B cell (primary cell): ENCODE measurements at regions of chr6 and their contacts with region 1.

Region 1: GRCh38 chr6:32853541-32854375 is at the starts of genes PSMB9 and TAP1:
- DNase-seq: peak; percentile 98
- ATAC-seq: peak; percentile 82
- H3K4me3 ChIP-seq: peak within 1 kb of the TSS; percentile 91 to 98 (median 94)
- H3K4me3 Mint-ChIP-seq: peak within 1 kb of the TSS; percentile 99
- H3K27ac ChIP-seq: peak within 1 kb of the TSS; percentile 98 to 99
- H3K27ac Mint-ChIP-seq: peak within 1 kb of the TSS; percentile 100
- H3K4me1 ChIP-seq: peaks cover 60 to 63% of the 10 kb centered on the region in 2 donors
- H3K4me1 Mint-ChIP-seq: peaks cover 75% of the 10 kb centered on the region
- H3K27me3 ChIP-seq: no peaks in the 10 kb centered on the region
- H3K27me3 Mint-ChIP-seq: no peaks in the 10 kb centered on the region
- CTCF ChIP-seq: peak; percentile 81
- total RNA-seq, gene PSMB9: 174 and 181 TPM in 2 replicates
- total RNA-seq, gene TAP1: 126 and 131 TPM in 2 replicates

Region 2: DNA sequence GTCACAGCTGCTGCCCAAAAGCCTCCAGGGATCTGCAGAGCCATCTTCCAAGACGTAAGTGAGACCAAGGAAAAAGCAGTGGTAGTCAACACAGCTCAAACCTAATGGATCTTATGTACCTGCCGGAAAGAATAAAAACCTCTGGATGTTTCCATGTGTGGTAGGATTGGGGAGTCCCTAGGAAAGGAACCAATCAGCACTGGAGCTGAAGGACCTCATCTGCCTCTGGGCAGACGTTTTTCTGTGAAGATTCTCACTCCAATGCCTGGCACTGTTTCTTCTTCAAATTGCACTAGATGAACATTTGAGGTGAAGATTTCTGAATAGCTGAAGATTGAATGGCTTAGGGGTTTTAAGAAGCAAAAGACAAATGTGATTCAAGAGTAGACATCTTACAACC is 90.3 kb before region 1 on chr6 and contains the start of gene HLA-DQB2:
- CTCF ChIA-PET with region 1: no interaction called
- POLR2A ChIA-PET with region 1: no interaction called
- intact Hi-C with region 1: no loop called
- DNase-seq: peak; percentile 56
- ATAC-seq: no peak
- H3K4me3 ChIP-seq: peak within 1 kb of the TSS in 2 of 5 experiments; percentile 18 to 30
- H3K4me3 Mint-ChIP-seq: peak within 1 kb of the TSS; percentile 63
- H3K27ac ChIP-seq: no peak within 1 kb of the TSS
- H3K27ac Mint-ChIP-seq: peak within 1 kb of the TSS; percentile 69
- H3K4me1 ChIP-seq: peaks cover 0 to 4% of the 10 kb centered on the region in 2 donors
- H3K4me1 Mint-ChIP-seq: peaks cover 4% of the 10 kb centered on the region
- H3K27me3 ChIP-seq: peaks cover 0 to 14% (median 5%) of the 10 kb centered on the region in 4 experiments
- H3K27me3 Mint-ChIP-seq: peaks cover 47% of the 10 kb centered on the region
- CTCF ChIP-seq: no peak
- total RNA-seq, gene HLA-DQB2: 109 and 112 TPM in 2 replicates

Region 3: GRCh38 chr6:32816746-32817204 is 37.0 kb before region 1 on chr6 and contains the start of gene HLA-DOB:
- CTCF ChIA-PET with region 1: interaction called, 7 read pairs
- POLR2A ChIA-PET with region 1: interaction called, 3 read pairs
- intact Hi-C with region 1: loop called (anchors 1 kb)
- DNase-seq: peak; percentile 87
- ATAC-seq: peak; percentile 76
- H3K4me3 ChIP-seq: peak within 1 kb of the TSS; percentile 91 to 97 (median 95)
- H3K4me3 Mint-ChIP-seq: peak within 1 kb of the TSS; percentile 99
- H3K27ac ChIP-seq: peak within 1 kb of the TSS; percentile 92 to 98
- H3K27ac Mint-ChIP-seq: peak within 1 kb of the TSS; percentile 99
- H3K4me1 ChIP-seq: peaks cover 77 to 80% of the 10 kb centered on the region in 2 donors
- H3K4me1 Mint-ChIP-seq: peaks cover 90% of the 10 kb centered on the region
- H3K27me3 ChIP-seq: no peaks in the 10 kb centered on the region
- H3K27me3 Mint-ChIP-seq: no peaks in the 10 kb centered on the region
- CTCF ChIP-seq: no peak
- total RNA-seq, gene HLA-DOB: 109 TPM in 2 replicates

Region 4: GRCh38 chr6:32947552-32948465 is 94.1 kb after region 1 on chr6:
- CTCF ChIA-PET with region 1: interaction called, 12 read pairs
- POLR2A ChIA-PET with region 1: interaction called, 14 read pairs
- intact Hi-C with region 1: no loop called
- DNase-seq: peak; percentile 76
- ATAC-seq: no peak
- H3K4me3 ChIP-seq: peak overlapping the region in 3 of 5 experiments; percentile 2 to 35 (median 6)
- H3K4me3 Mint-ChIP-seq: peak overlapping the region; percentile 84
- H3K27ac ChIP-seq: peak overlapping the region; percentile 97 to 98
- H3K27ac Mint-ChIP-seq: peak overlapping the region; percentile 92
- H3K4me1 ChIP-seq: peaks cover 80 to 94% of the 10 kb centered on the region in 2 donors
- H3K4me1 Mint-ChIP-seq: peaks cover 86% of the 10 kb centered on the region
- H3K27me3 ChIP-seq: no peaks in the 10 kb centered on the region
- H3K27me3 Mint-ChIP-seq: no peaks in the 10 kb centered on the region
- CTCF ChIP-seq: peak; percentile 70

Region 5: DNA sequence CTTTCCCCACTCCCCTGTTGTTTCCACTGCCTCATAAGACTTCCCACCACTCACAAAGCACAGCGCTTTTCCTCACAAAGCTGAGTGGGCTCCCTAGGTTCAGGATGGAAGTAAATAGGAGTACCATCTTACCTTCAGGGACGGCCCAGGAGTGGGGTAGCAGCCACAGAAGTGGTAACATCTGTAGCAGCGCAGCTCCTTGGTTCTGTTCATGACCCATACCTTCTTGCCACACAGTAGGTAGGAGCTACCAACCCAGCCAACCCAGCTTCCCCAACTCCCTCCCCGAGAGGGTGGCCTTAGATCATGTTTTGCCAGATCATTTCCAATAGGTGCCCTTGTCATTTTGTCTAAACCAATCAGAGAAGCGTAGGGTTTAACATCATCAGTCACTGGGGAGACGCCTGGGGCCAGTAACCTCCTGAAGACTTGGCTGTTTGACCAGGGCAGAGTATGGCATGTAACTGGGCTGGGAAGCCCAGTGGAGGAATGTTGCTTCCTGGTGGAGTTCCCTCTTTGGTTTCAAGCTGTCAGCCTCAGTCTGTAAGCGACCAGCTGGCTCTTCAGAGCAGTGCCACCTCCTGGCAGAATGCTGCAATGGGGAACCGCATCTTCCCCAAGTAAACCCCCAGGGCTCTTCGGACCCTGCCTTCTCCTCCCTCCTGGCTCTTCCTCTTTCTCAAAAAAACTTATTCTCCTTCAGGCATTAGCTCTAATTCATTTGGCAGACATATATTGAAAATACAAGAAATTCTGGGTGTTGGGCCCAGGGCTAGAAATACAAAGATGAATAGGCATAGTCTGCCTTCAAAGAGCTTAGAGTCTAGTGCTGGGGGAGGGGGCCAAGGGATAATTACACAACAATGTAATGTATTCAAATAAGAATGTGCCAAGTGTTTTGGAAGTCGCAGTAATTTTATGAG is 99.3 kb after region 1 on chr6 and contains the start of gene HLA-DMA:
- CTCF ChIA-PET with region 1: interaction called, 12 read pairs
- POLR2A ChIA-PET with region 1: interaction called, 11 read pairs
- intact Hi-C with region 1: no loop called
- DNase-seq: peak; percentile 97
- ATAC-seq: peak; percentile 91
- H3K4me3 ChIP-seq: peak within 1 kb of the TSS; percentile 72 to 98 (median 93)
- H3K4me3 Mint-ChIP-seq: peak within 1 kb of the TSS; percentile 96
- H3K27ac ChIP-seq: peak within 1 kb of the TSS; percentile 91 to 92
- H3K27ac Mint-ChIP-seq: peak within 1 kb of the TSS; percentile 98
- H3K4me1 ChIP-seq: peaks cover 70 to 84% of the 10 kb centered on the region in 2 donors
- H3K4me1 Mint-ChIP-seq: peaks cover 85% of the 10 kb centered on the region
- H3K27me3 ChIP-seq: no peaks in the 10 kb centered on the region
- H3K27me3 Mint-ChIP-seq: no peaks in the 10 kb centered on the region
- CTCF ChIP-seq: peak; percentile 88
- total RNA-seq, gene HLA-DMA: 554 and 558 TPM in 2 replicates